Sciatic nerve (tissue), 2 donors: ENCODE measurements at regions of chr6 and their contacts with region 1.

Region 1: GRCh38 chr6:21738184-21739119 is 144.9 kb downstream of the SOX4 start:
- DNase-seq: no peak
- ATAC-seq: no peak

Region 2: GRCh38 chr6:21811484-21811883 is 73.0 kb after region 1 on chr6:
- intact Hi-C with region 1: loop called (anchors 2 kb)
- DNase-seq: no peak
- ATAC-seq: no peak

Region 3: GRCh38 chr6:22343859-22344258 is 605.4 kb after region 1 on chr6:
- intact Hi-C with region 1: no loop called
- DNase-seq: no peak
- ATAC-seq: no peak